ENCODE measurements at regions of chr12 and their contacts with region 1.

Region 1: GRCh38 chr12:11543457-11544158 is 105.9 kb upstream of the ETV6 start:
- DNase-seq: no peak
- H3K4me3 ChIP-seq: no peak overlapping the region
- H3K27ac ChIP-seq: no peak overlapping the region
- H3K4me1 ChIP-seq: no peaks in the 10 kb centered on the region
- H3K27me3 ChIP-seq: no peaks in the 10 kb centered on the region
- CTCF ChIP-seq: no peak
- POLR2A ChIP-seq: no peak

Region 2: GRCh38 chr12:10381928-10382628 is 1161.5 kb before region 1 on chr12:
- intact Hi-C with region 1: loop called (anchors 5 kb)
- DNase-seq: no peak
- H3K4me3 ChIP-seq: no peak overlapping the region
- H3K27ac ChIP-seq: no peak overlapping the region
- H3K4me1 ChIP-seq: no peaks in the 10 kb centered on the region
- H3K27me3 ChIP-seq: no peaks in the 10 kb centered on the region
- CTCF ChIP-seq: no peak
- POLR2A ChIP-seq: no peak

Region 3: DNA sequence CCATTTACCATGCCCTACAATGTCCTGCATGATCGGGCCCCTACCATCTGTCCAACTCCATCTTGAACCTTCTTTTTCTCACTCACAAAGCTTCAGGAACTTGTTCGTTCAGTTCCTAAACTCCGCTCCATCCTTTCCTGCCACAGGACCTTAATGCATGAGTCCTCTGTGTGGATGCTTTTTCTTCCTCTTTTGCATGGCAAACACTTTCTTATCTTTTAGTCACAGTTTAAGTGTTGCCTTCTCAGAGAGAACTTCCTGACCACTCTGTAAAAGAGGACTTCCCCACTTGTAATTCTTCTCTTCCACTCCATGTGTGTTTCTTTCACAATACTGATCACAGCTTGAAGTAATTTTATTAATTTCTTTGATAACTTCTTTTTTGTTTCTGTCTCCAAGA is 51.5 kb after region 1 on chr12:
- intact Hi-C with region 1: no loop called
- DNase-seq: no peak
- H3K4me3 ChIP-seq: no peak overlapping the region
- H3K27ac ChIP-seq: no peak overlapping the region
- H3K4me1 ChIP-seq: no peaks in the 10 kb centered on the region
- H3K27me3 ChIP-seq: no peaks in the 10 kb centered on the region
- CTCF ChIP-seq: no peak
- POLR2A ChIP-seq: no peak

Measured in vagina (tissue), 2 donors.